HepG2 (cell line): ENCODE measurements at regions of chr16 and their contacts with region 1.

Region 1: GRCh38 chr16:58652461-58653140 is 23.0 kb upstream of the CNOT1 start:
- DNase-seq: peak; percentile 57
- ATAC-seq: peak; percentile 56
- H3K4me3 ChIP-seq: no peak overlapping the region
- H3K27ac ChIP-seq: no peak overlapping the region
- H3K4me1 ChIP-seq: peaks cover 72% of the 10 kb centered on the region
- H3K27me3 ChIP-seq: no peaks in the 10 kb centered on the region
- CTCF ChIP-seq: no peak
- EP300 ChIP-seq: no peak
- POLR2A ChIP-seq: no peak
- RAD21 ChIP-seq: no peak

Region 2: DNA sequence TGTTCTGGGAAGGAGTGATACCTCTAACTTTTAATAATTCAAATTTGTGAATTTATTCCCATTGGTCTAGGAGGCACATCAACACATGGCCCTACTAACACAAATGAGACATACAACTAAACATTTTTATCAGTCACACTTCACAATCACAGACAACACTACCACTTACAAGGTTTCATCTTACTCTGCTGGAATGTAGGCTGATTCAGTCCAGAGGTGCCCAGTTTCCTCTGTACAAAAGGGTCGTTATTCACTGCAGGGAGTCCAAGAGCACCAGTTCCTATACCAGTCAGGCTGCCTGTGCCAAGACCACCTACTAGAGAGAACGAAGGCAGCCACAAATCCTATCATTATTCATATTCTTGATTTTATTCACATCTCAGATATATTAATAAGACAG is 95.9 kb before region 1 on chr16:
- CTCF ChIA-PET with region 1: no interaction called
- POLR2A ChIA-PET with region 1: no interaction called
- in situ Hi-C with region 1: no loop called
- intact Hi-C with region 1: no loop called
- DNase-seq: no peak
- ATAC-seq: no peak
- H3K4me3 ChIP-seq: no peak overlapping the region
- H3K27ac ChIP-seq: no peak overlapping the region
- H3K4me1 ChIP-seq: no peaks in the 10 kb centered on the region
- H3K27me3 ChIP-seq: no peaks in the 10 kb centered on the region
- CTCF ChIP-seq: no peak
- EP300 ChIP-seq: no peak
- POLR2A ChIP-seq: no peak
- RAD21 ChIP-seq: no peak

Region 3: GRCh38 chr16:58629572-58630104 is 23.0 kb before region 1 on chr16 and contains the start of gene CNOT1:
- CTCF ChIA-PET with region 1: no interaction called
- POLR2A ChIA-PET with region 1: interaction called, 44 read pairs
- in situ Hi-C with region 1: no loop called
- intact Hi-C with region 1: loop called (anchors 1 kb)
- DNase-seq: peak; percentile 100
- ATAC-seq: peak; percentile 93
- H3K4me3 ChIP-seq: peak within 1 kb of the TSS; percentile 94 to 100 (median 98)
- H3K27ac ChIP-seq: peak within 1 kb of the TSS; percentile 96
- H3K4me1 ChIP-seq: peaks cover 39% of the 10 kb centered on the region
- H3K27me3 ChIP-seq: no peaks in the 10 kb centered on the region; a peak in 1 of 5 replicates
- CTCF ChIP-seq: no peak
- EP300 ChIP-seq: peak in 1 of 2 experiments; percentile 14; a peak in 1 of 4 replicates
- POLR2A ChIP-seq: peak; percentile 85 to 87
- RAD21 ChIP-seq: no peak
- total RNA-seq, gene CNOT1: 188 and 399 TPM in 2 replicates

Region 4: GRCh38 chr16:58638148-58639036 is 14.2 kb before region 1 on chr16:
- CTCF ChIA-PET with region 1: no interaction called
- POLR2A ChIA-PET with region 1: interaction called, 44 read pairs
- in situ Hi-C with region 1: no loop called
- intact Hi-C with region 1: no loop called
- DNase-seq: peak; percentile 79
- ATAC-seq: peak; percentile 94
- H3K4me3 ChIP-seq: no peak overlapping the region
- H3K27ac ChIP-seq: no peak overlapping the region
- H3K4me1 ChIP-seq: peaks cover 50% of the 10 kb centered on the region
- H3K27me3 ChIP-seq: no peaks in the 10 kb centered on the region; a peak in 1 of 5 replicates
- CTCF ChIP-seq: peak; percentile 89
- EP300 ChIP-seq: no peak
- POLR2A ChIP-seq: no peak
- RAD21 ChIP-seq: peak; percentile 88